HEK293 (cell line): ENCODE measurements at regions of chr11 and their contacts with region 1.

Region 1: GRCh38 chr11:127074151-127074761 is 73.7 kb upstream of the KIRREL3 start:
- H3K4me3 ChIP-seq: no peak overlapping the region
- H3K27ac ChIP-seq: no peak overlapping the region
- H3K4me1 ChIP-seq: no peaks in the 10 kb centered on the region
- CTCF ChIP-seq: no peak

Region 2: GRCh38 chr11:126904520-126904919 is 169.7 kb before region 1 on chr11:
- CTCF ChIA-PET with region 1: no interaction called
- POLR2A ChIA-PET with region 1: no interaction called
- H3K4me3 ChIP-seq: no peak overlapping the region
- H3K27ac ChIP-seq: no peak overlapping the region
- H3K4me1 ChIP-seq: no peaks in the 10 kb centered on the region
- CTCF ChIP-seq: no peak

Region 3: GRCh38 chr11:127063214-127063613 is 11.0 kb before region 1 on chr11:
- CTCF ChIA-PET with region 1: interaction called, 10 read pairs
- POLR2A ChIA-PET with region 1: no interaction called
- H3K4me3 ChIP-seq: no peak overlapping the region
- H3K27ac ChIP-seq: no peak overlapping the region
- H3K4me1 ChIP-seq: no peaks in the 10 kb centered on the region
- CTCF ChIP-seq: no peak